Activated CD4-positive, alpha-beta T cell treated with anti-CD3 and anti-CD28 coated beads, Interleukin-2, amount 10 ng/mL, durations not matched to agents 24 days and 14 days (primary cell): ENCODE measurements at regions of chr7 and their contacts with region 1.

Region 1: GRCh38 chr7:33744293-33745075 is 160.9 kb upstream of the BMPER start:
- DNase-seq: peak; percentile 59
- H3K4me3 Mint-ChIP-seq: no peak overlapping the region
- H3K27ac Mint-ChIP-seq: no peak overlapping the region
- H3K4me1 Mint-ChIP-seq: no peaks in the 10 kb centered on the region
- H3K27me3 Mint-ChIP-seq: no peaks in the 10 kb centered on the region

Region 2: DNA sequence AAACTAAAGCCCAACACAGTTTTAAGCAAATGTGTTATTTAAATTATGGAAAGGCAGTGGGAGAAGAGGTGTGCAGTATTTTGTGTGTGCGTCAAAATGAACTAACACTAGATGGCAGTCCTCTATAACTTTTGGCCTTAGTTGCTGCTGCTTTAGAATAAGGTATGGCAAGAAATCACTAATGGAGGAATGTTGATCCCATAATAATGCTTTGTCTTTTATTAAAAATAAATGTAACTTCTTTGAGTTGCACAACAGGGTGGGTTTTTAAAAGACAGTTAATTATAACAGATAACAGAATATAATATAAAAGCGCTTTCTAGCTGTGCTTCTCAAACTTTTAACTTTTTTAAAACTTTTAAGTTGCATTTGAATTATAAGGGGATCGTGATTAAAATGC is 558.7 kb before region 1 on chr7:
- intact Hi-C with region 1: loop called (anchors 10 kb)
- DNase-seq: peak; percentile 69
- H3K4me3 Mint-ChIP-seq: no peak overlapping the region
- H3K27ac Mint-ChIP-seq: no peak overlapping the region
- H3K4me1 Mint-ChIP-seq: peaks cover 3% of the 10 kb centered on the region
- H3K27me3 Mint-ChIP-seq: no peaks in the 10 kb centered on the region

Region 3: DNA sequence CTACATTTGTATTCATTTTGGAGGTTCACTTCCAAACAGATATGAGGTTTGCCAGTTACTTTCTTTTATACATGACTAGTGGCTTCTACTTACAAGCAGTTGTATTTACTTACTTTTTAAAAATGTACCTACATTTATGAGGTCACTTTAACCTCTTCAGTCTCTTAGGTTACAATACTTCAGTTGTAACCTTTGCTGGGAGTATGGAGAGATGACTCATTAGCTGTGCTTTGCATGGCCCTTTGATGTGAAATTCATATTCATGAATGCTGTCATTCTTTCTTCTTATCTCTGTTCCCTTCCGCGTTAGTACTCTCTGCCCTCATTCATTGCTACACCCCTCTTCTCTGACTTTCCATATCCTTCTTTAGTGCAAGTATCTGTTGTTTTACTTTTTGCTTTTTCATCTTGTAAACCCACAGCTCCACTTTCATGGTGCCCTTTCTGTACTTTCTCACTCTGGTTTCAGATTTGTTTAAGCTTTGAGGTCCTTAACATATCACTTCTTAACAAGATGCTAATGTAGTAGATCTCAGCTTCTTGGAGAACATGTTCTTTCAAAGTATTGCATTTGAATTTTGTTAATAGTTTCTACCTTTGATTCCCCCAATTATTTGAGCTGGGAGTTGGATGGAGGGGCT is 325.3 kb after region 1 on chr7:
- intact Hi-C with region 1: no loop called
- DNase-seq: no peak
- H3K4me3 Mint-ChIP-seq: no peak overlapping the region
- H3K27ac Mint-ChIP-seq: no peak overlapping the region
- H3K4me1 Mint-ChIP-seq: no peaks in the 10 kb centered on the region
- H3K27me3 Mint-ChIP-seq: no peaks in the 10 kb centered on the region